Heart left ventricle (tissue), 16 donors: ENCODE measurements at regions of chr11 and their contacts with region 1.

Region 1: GRCh38 chr11:78798660-78799059 is 224.0 kb upstream of the NARS2 start:
- DNase-seq: peak; percentile 73 to 81 (median 76)
- ATAC-seq: peak; percentile 79 to 92 (median 86)
- H3K4me3 ChIP-seq: no peak overlapping the region
- H3K27ac ChIP-seq: peak overlapping the region in 2 of 12 donors; percentile 7 to 74
- H3K4me1 ChIP-seq: peaks cover 0 to 49% (median 22%) of the 10 kb centered on the region in 12 donors
- H3K27me3 ChIP-seq: no peaks in the 10 kb centered on the region
- CTCF ChIP-seq: peak; percentile 75 to 93 (median 84)
- POLR2A ChIP-seq: no peak

Region 2: GRCh38 chr11:78961247-78961646 is 162.6 kb after region 1 on chr11:
- intact Hi-C with region 1: loop called in 4 of 10 experiments (anchors 2 to 10 kb)
- DNase-seq: peak in 1 of 5 donors; percentile 22
- ATAC-seq: peak in 3 of 4 donors; percentile 56 to 82 (median 68)
- H3K4me3 ChIP-seq: no peak overlapping the region
- H3K27ac ChIP-seq: no peak overlapping the region
- H3K4me1 ChIP-seq: peaks cover 0 to 10% (median under 1%) of the 10 kb centered on the region in 12 donors
- H3K27me3 ChIP-seq: peaks cover 0 to 29% (median 7%) of the 10 kb centered on the region in 9 donors
- CTCF ChIP-seq: peak in 10 of 12 donors; percentile 18 to 55 (median 43)
- POLR2A ChIP-seq: no peak

Region 3: DNA sequence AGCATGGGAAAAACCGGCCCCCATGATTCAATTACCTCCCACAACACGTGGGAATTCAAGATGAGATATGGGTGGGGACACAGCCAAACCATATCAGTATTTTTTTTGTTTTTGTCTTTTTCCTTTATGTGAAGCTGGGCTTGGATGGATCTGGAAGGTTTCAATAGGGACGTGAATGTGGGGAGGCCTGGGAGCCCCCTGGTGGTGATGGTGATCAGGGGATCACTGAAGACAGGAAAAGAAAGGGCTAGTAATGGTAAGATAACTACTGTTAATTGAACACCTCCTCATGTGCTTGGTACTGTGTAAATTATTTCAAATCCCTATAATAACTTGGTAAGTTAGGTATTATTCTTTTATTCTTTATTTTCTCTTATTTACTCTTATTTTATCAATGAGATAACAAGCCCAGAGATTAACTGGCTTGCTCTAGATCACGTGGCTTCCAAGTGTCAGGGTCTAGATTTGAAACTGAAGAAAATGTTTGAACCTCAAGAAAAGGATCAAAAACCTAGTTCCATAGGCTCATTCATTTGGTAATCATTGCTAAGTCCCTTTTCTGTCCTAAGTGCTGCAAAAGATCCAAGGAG is 278.0 kb after region 1 on chr11:
- intact Hi-C with region 1: loop called in 1 of 10 experiments (anchors 10 kb)
- DNase-seq: peak in 2 of 5 donors; percentile 39 to 52
- ATAC-seq: no peak
- H3K4me3 ChIP-seq: no peak overlapping the region
- H3K27ac ChIP-seq: no peak overlapping the region
- H3K4me1 ChIP-seq: no peaks in the 10 kb centered on the region
- H3K27me3 ChIP-seq: no peaks in the 10 kb centered on the region
- CTCF ChIP-seq: peak; percentile 38 to 73 (median 60)
- POLR2A ChIP-seq: no peak